AG04450 (cell line): ENCODE measurements at regions of chr13 and their contacts with region 1.

Region 1: GRCh38 chr13:41065078-41065477 is 3.8 kb downstream of the WBP4 start:
- DNase-seq: peak; percentile 75
- H3K4me3 ChIP-seq: no peak overlapping the region
- H3K27ac ChIP-seq: no peak overlapping the region
- H3K27me3 ChIP-seq: no peaks in the 10 kb centered on the region
- CTCF ChIP-seq: no peak

Region 2: GRCh38 chr13:40039061-40039460 is 1026.0 kb before region 1 on chr13:
- CTCF ChIA-PET with region 1: no interaction called
- POLR2A ChIA-PET with region 1: no interaction called
- DNase-seq: no peak
- H3K4me3 ChIP-seq: no peak overlapping the region
- H3K27ac ChIP-seq: no peak overlapping the region
- H3K27me3 ChIP-seq: no peaks in the 10 kb centered on the region
- CTCF ChIP-seq: no peak

Region 3: GRCh38 chr13:41029629-41030028 is 35.4 kb before region 1 on chr13:
- CTCF ChIA-PET with region 1: no interaction called
- POLR2A ChIA-PET with region 1: no interaction called
- DNase-seq: no peak
- H3K4me3 ChIP-seq: no peak overlapping the region
- H3K27ac ChIP-seq: no peak overlapping the region
- H3K27me3 ChIP-seq: no peaks in the 10 kb centered on the region
- CTCF ChIP-seq: no peak

Region 4: GRCh38 chr13:41040606-41041319 is 24.3 kb before region 1 on chr13:
- CTCF ChIA-PET with region 1: no interaction called
- POLR2A ChIA-PET with region 1: no interaction called
- DNase-seq: no peak
- H3K4me3 ChIP-seq: no peak overlapping the region
- H3K27ac ChIP-seq: no peak overlapping the region
- H3K27me3 ChIP-seq: no peaks in the 10 kb centered on the region
- CTCF ChIP-seq: no peak

Region 5: GRCh38 chr13:41639955-41640780 is 575.1 kb after region 1 on chr13:
- CTCF ChIA-PET with region 1: no interaction called
- POLR2A ChIA-PET with region 1: interaction called, 13 read pairs
- DNase-seq: no peak
- H3K4me3 ChIP-seq: no peak overlapping the region
- H3K27ac ChIP-seq: no peak overlapping the region
- H3K27me3 ChIP-seq: no peaks in the 10 kb centered on the region
- CTCF ChIP-seq: no peak

Region 6: GRCh38 chr13:41960639-41961465 is 895.8 kb after region 1 on chr13 and contains the start of gene VWA8:
- CTCF ChIA-PET with region 1: no interaction called
- POLR2A ChIA-PET with region 1: no interaction called
- DNase-seq: no peak
- H3K4me3 ChIP-seq: peak within 1 kb of the TSS; percentile 79
- H3K27ac ChIP-seq: peak within 1 kb of the TSS; percentile 53
- H3K27me3 ChIP-seq: no peaks in the 10 kb centered on the region
- CTCF ChIP-seq: no peak
- polyA plus RNA-seq, gene VWA8: 10.4 and 12.4 TPM in 2 replicates